Prostate gland (tissue), 2 donors: ENCODE measurements at regions of chr10 and their contacts with region 1.

Region 1: GRCh38 chr10:132396495-132397035 is 435 bp upstream of the PWWP2B start:
- DNase-seq: peak; percentile 65
- H3K4me3 ChIP-seq: peak overlapping the region; percentile 71 to 87
- H3K27ac ChIP-seq: peak overlapping the region; percentile 90 to 97
- H3K4me1 ChIP-seq: peaks cover 26% of the 10 kb centered on the region
- H3K27me3 ChIP-seq: no peaks in the 10 kb centered on the region
- CTCF ChIP-seq: peak in 3 of 4 experiments; percentile 16 to 59 (median 53)
- POLR2A ChIP-seq: no peak

Region 2: DNA sequence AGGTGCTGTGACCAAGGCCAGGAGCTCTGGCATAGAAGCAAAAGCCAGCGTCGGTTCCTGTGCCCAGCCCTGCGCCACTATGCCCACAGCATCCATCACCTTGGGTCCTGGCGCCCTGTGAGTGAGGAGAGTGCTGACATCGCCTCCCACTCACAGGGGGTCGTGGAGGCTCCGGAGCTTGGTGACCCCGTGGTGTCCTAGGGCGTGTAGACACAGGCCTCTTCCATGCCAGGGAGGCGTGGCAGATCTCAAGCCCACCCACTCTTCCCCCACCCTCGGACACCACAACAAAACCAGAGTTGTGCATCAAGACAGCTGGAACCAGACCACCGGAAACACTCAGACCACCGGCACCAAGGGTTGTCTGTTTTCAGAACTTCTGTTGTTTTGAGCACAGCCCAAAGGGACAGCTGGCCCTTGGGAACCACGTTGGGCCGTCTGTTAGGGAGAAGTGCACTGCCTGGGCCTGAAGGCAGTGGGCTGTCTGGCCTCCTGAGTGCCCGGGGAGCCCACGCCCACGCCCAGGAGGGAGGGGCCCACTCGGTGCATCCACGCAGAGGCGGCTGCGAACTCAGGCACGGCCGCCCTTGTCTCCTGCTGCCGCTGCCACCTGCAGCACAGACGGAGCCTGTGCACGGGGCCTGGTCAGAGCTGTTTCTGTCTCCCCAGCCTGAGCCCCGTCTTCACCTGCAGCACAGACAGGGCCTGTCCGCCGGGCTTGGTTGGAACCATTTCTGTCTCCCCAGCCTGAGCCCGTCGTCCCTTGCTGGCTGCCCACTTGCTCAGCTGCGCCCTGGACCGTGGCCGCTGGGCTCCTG is 247.4 kb after region 1 on chr10:
- intact Hi-C with region 1: loop called (anchors 10 kb)
- DNase-seq: no peak
- H3K4me3 ChIP-seq: no peak overlapping the region
- H3K27ac ChIP-seq: no peak overlapping the region
- H3K4me1 ChIP-seq: no peaks in the 10 kb centered on the region
- H3K27me3 ChIP-seq: no peaks in the 10 kb centered on the region
- CTCF ChIP-seq: no peak
- POLR2A ChIP-seq: no peak